Psoas muscle (tissue), 8 donors: ENCODE measurements at regions of chr9 and their contacts with region 1.

Region 1: GRCh38 chr9:90546229-90546641 is 96.4 kb downstream of the DIRAS2 start:
- DNase-seq: no peak
- ATAC-seq: no peak
- H3K4me3 ChIP-seq: no peak overlapping the region
- H3K27ac ChIP-seq: no peak overlapping the region
- H3K4me1 ChIP-seq: no peaks in the 10 kb centered on the region
- H3K27me3 ChIP-seq: no peaks in the 10 kb centered on the region
- CTCF ChIP-seq: no peak

Region 2: DNA sequence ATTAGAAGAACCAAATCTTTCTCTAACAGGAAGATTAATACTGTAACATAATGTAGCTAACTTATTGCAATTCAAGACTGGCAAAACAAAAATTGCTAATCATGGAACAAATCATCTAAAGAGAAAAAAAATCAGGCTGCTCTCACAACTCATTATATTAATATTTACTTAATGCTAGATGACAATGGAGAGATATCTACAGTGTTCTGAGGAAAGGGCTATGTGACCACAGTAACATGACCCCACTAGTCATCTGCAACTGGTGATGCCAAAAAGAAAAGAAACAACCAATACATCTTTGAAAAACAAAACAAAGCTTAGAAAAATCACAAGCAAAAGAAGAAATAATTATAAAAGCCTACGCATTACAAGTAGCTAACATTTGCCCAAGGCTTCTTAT is 66.5 kb before region 1 on chr9:
- intact Hi-C with region 1: loop called in 1 of 2 experiments (anchors 10 kb)
- DNase-seq: no peak
- ATAC-seq: no peak
- H3K4me3 ChIP-seq: no peak overlapping the region
- H3K27ac ChIP-seq: no peak overlapping the region
- H3K4me1 ChIP-seq: no peaks in the 10 kb centered on the region
- H3K27me3 ChIP-seq: no peaks in the 10 kb centered on the region
- CTCF ChIP-seq: no peak